Dorsolateral prefrontal cortex (tissue), 120 donors: ENCODE measurements at regions of chr2 and their contacts with region 1.

Region 1: GRCh38 chr2:207041279-207041678 is 102.0 kb downstream of the CPO start:
- DNase-seq: no peak
- H3K4me3 ChIP-seq: peak overlapping the region; percentile 2 to 71 (median 48)
- H3K27ac ChIP-seq: peak overlapping the region; percentile 6 to 90 (median 79)
- H3K27me3 ChIP-seq: no peaks in the 10 kb centered on the region
- CTCF ChIP-seq: no peak

Region 2: DNA sequence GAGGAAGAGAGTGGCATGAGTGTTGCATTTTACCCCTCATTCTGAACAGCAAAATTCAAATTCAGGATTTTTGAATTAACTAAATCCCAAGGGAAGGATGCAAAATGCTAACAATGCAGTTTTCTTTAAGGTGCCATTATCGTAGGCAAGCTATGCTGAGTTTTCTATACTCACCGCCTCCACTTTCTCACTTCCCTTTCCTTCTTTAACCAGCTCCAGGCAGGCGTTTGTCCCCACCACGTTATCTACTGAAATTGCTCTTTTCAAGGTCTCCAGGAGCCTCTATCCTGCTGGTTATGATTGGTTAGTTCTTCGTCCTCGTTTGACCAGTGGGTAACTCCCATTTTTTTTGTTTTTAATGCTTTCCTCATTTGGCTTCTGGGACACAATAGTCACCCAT is 103.7 kb before region 1 on chr2:
- intact Hi-C with region 1: no loop called
- DNase-seq: no peak
- H3K4me3 ChIP-seq: no peak overlapping the region
- H3K27ac ChIP-seq: no peak overlapping the region
- H3K27me3 ChIP-seq: no peaks in the 10 kb centered on the region
- CTCF ChIP-seq: no peak

Region 3: DNA sequence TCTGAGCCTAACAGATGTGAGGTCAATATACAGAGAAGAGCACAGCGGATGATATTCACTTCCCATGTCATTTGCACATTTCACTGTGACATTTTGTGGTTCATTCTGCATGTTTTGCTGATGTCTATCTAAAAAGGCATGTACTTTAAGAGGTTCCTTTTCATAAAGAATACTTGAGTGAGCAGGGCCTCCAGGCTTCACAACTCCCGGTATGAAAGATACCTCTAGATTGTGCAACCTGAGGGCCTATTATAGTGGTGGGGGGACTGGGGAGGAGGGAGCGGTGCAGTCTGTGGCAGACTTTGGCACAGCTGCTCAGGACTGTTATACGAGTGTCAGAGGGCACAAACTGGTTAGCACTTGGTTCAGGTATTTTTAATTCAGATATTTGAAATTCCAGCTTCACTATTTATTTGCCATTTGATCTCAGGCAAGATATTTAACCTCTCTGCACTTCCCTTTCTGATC is 47.2 kb before region 1 on chr2:
- intact Hi-C with region 1: no loop called
- DNase-seq: no peak
- H3K4me3 ChIP-seq: no peak overlapping the region
- H3K27ac ChIP-seq: no peak overlapping the region
- H3K27me3 ChIP-seq: no peaks in the 10 kb centered on the region
- CTCF ChIP-seq: no peak

Region 4: GRCh38 chr2:207008105-207008990 is 32.9 kb before region 1 on chr2:
- intact Hi-C with region 1: loop called in 1 of 2 experiments (anchors 5 kb)
- DNase-seq: peak in 3 of 10 donors; percentile 5 to 37 (median 20)
- H3K4me3 ChIP-seq: peak overlapping the region in 6 of 59 donors; percentile 2 to 30 (median 17)
- H3K27ac ChIP-seq: peak overlapping the region in 57 of 59 donors; percentile 12 to 95 (median 87)
- H3K27me3 ChIP-seq: no peaks in the 10 kb centered on the region
- CTCF ChIP-seq: peak in 35 of 56 donors; percentile 10 to 48 (median 28)

Region 5: GRCh38 chr2:207683879-207684627 is 642.8 kb after region 1 on chr2:
- intact Hi-C with region 1: no loop called
- DNase-seq: no peak
- H3K4me3 ChIP-seq: no peak overlapping the region
- H3K27ac ChIP-seq: no peak overlapping the region
- H3K27me3 ChIP-seq: peaks cover 0 to 18% (median 0%) of the 10 kb centered on the region in 45 donors
- CTCF ChIP-seq: no peak